Heart left ventricle (tissue), 16 donors: ENCODE measurements at regions of chr19 and their contacts with region 1.

Region 1: DNA sequence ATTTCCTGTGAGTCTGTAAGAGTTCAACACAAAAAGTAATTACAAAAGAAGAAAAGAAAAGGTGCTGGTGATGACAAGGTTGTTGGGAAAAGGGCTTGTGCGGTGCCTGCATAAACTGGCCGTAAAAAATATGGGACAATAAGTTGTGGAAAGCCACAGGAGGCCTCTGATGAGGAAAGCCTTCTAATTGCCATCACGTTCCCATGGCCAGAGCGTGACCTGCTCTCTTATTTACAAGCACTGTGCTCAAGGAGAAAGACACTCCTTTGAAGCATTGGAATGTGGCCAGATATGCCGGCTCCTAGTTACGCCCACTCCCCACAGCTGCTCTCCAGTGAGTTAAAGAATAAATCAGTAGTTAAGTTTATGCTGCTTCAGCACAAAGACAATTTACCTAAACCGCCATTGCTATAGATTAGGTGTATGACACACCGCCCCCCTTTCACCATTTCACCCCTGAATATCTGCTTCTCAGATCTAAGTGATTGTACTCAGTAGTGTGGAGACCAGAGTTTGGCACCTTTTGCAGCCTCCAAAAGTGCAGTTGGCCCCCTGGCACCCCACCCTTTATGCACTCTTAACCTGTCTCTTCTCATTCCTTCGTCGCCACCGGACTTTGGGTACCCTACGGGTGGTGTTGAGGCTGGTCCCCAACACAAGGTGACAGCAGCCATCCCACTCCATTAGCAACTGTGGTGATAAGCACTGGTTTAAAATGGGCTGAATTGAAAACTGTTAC is 8.1 kb upstream of the PGLYRP1 start:
- DNase-seq: no peak
- ATAC-seq: no peak
- H3K4me3 ChIP-seq: no peak overlapping the region
- H3K27ac ChIP-seq: no peak overlapping the region
- H3K4me1 ChIP-seq: no peaks in the 10 kb centered on the region
- H3K27me3 ChIP-seq: peaks cover 0 to 39% (median 8%) of the 10 kb centered on the region in 9 donors
- CTCF ChIP-seq: no peak
- POLR2A ChIP-seq: no peak

Region 2: GRCh38 chr19:46186101-46187100 is 155.4 kb after region 1 on chr19:
- intact Hi-C with region 1: loop called in 5 of 10 experiments (anchors 1 to 5 kb)
- DNase-seq: no peak
- ATAC-seq: no peak
- H3K4me3 ChIP-seq: no peak overlapping the region
- H3K27ac ChIP-seq: no peak overlapping the region
- H3K4me1 ChIP-seq: no peaks in the 10 kb centered on the region
- H3K27me3 ChIP-seq: peaks cover 0 to 47% (median 13%) of the 10 kb centered on the region in 9 donors
- CTCF ChIP-seq: no peak
- POLR2A ChIP-seq: no peak

Region 3: GRCh38 chr19:46192992-46193650 is 162.1 kb after region 1 on chr19:
- intact Hi-C with region 1: loop called in 5 of 10 experiments (anchors 1 to 5 kb)
- DNase-seq: peak in 1 of 5 donors; percentile 39
- ATAC-seq: peak in 2 of 4 donors; percentile 48 to 55
- H3K4me3 ChIP-seq: no peak overlapping the region
- H3K27ac ChIP-seq: no peak overlapping the region
- H3K4me1 ChIP-seq: peaks cover 0 to 18% (median 0%) of the 10 kb centered on the region in 12 donors
- H3K27me3 ChIP-seq: peaks cover 0 to 52% (median 12%) of the 10 kb centered on the region in 9 donors
- CTCF ChIP-seq: no peak
- POLR2A ChIP-seq: no peak

Region 4: DNA sequence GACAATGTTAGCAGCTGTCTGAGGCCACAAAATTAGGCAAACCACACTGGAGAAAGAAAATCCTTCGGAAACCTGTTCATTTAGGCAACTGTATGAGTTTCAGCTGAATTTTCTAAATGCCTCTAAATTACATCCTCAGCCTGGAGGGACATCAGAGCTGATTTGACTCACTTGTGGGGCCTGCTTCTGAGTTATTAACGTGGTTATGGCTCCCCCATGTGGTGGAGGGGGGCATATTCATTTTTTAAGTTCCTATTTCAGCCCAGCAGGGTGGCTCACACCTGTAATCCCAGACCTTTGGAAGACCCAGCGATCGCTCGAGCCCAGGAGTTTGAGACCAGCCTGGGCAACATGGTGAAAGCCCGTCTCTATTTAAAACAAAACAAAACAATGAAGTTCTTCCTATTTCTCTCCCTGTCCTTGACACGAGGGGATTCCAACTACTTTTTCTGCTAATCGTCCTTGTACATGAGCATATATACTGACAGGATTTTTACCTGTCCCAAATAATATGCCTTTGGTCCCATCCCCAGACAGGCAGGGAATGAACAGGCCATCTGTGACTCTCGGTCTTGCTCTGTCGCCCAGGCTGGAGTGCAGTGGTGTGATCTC is 234.3 kb after region 1 on chr19:
- intact Hi-C with region 1: loop called (anchors 1 to 5 kb)
- DNase-seq: peak in 4 of 5 donors; percentile 38 to 54 (median 48)
- ATAC-seq: peak; percentile 71 to 89 (median 74)
- H3K4me3 ChIP-seq: no peak overlapping the region
- H3K27ac ChIP-seq: no peak overlapping the region
- H3K4me1 ChIP-seq: peaks cover 0 to 4% (median 0%) of the 10 kb centered on the region in 12 donors
- H3K27me3 ChIP-seq: peaks cover 0 to 38% (median 7%) of the 10 kb centered on the region in 9 donors
- CTCF ChIP-seq: peak; percentile 79 to 88 (median 86)
- POLR2A ChIP-seq: no peak